Dendritic cell treated with granulocyte-macrophage colony-stimulating factor and Interleukin-4, amounts not matched to agents 40 ng/mL and 50 ng/mL, for 4 days (primary cell): ENCODE measurements at regions of chr16 and their contacts with region 1.

Region 1: GRCh38 chr16:84186685-84187437 is at the start of gene TAF1C:
- H3K4me3 Mint-ChIP-seq: peak within 1 kb of the TSS; percentile 95
- H3K27ac Mint-ChIP-seq: peak within 1 kb of the TSS; percentile 88
- H3K4me1 Mint-ChIP-seq: peaks cover 25% of the 10 kb centered on the region
- H3K27me3 Mint-ChIP-seq: no peaks in the 10 kb centered on the region

Region 2: GRCh38 chr16:83903751-83904150 is 283.1 kb before region 1 on chr16:
- intact Hi-C with region 1: no loop called
- H3K4me3 Mint-ChIP-seq: no peak overlapping the region
- H3K27ac Mint-ChIP-seq: no peak overlapping the region
- H3K4me1 Mint-ChIP-seq: peaks cover 21% of the 10 kb centered on the region
- H3K27me3 Mint-ChIP-seq: no peaks in the 10 kb centered on the region

Region 3: GRCh38 chr16:83967806-83968305 is 219.0 kb before region 1 on chr16 and contains the start of gene NECAB2:
- intact Hi-C with region 1: loop called (anchors 2 kb)
- H3K4me3 Mint-ChIP-seq: peak within 1 kb of the TSS; percentile 61
- H3K27ac Mint-ChIP-seq: no peak within 1 kb of the TSS
- H3K4me1 Mint-ChIP-seq: peaks cover 5% of the 10 kb centered on the region
- H3K27me3 Mint-ChIP-seq: peaks cover 41% of the 10 kb centered on the region

Region 4: GRCh38 chr16:84116720-84117493 is 70.0 kb before region 1 on chr16 and contains the start of gene MBTPS1:
- intact Hi-C with region 1: loop called (anchors 2 kb)
- H3K4me3 Mint-ChIP-seq: peak within 1 kb of the TSS; percentile 83
- H3K27ac Mint-ChIP-seq: peak within 1 kb of the TSS; percentile 85
- H3K4me1 Mint-ChIP-seq: peaks cover 29% of the 10 kb centered on the region
- H3K27me3 Mint-ChIP-seq: peaks cover 2% of the 10 kb centered on the region

Region 5: DNA sequence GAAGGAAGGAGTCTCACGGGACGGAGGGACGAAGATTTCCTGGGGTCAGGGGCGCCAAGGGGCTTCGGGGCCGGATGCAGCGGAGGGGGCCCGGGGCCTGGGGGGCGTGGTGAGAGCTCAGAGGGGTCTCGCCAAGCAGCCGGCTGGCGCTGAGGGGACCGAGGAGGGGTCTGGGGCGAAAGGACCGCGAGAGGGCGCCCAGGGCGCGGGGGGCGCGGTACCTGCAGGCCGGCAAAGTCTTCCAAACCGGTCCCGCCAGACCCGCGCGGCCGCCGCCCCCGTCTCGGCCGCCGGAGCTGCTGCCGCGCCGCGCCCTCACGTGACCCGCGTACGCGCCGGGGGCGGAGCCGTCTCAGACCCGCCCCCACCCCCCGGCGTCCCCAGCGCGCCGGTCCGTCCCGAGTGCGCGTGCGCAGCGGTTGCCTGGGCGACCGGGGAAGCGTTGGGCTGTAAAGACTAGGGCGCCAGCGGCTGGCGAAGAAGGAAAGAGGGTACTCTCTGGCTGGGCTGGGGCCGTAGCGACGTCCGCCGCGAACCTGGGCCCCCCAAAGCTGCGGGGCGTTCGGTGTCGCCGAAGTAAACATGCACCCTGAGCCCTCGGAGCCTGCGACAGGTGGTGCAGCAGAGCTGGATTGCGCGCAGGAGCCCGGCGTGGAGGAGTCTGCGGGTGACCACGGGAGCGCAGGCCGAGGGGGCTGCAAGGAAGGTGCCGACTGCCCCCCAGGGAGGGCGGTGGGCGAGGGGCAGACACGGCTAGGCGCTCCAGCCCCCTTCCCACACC is 41.8 kb before region 1 on chr16 and contains the starts of genes DNAAF1 and HSDL1:
- intact Hi-C with region 1: loop called (anchors 2 kb)
- H3K4me3 Mint-ChIP-seq: peak within 1 kb of the TSS; percentile 88
- H3K27ac Mint-ChIP-seq: peak within 1 kb of the TSS; percentile 84
- H3K4me1 Mint-ChIP-seq: peaks cover 6% of the 10 kb centered on the region
- H3K27me3 Mint-ChIP-seq: peaks cover 24% of the 10 kb centered on the region